Esophagus muscularis mucosa (tissue), 4 donors: ENCODE measurements at regions of chr17 and their contacts with region 1.

Region 1: GRCh38 chr17:62968445-62968923 is 2.4 kb downstream of the TANC2 start:
- DNase-seq: no peak
- H3K4me3 ChIP-seq: no peak overlapping the region
- H3K27ac ChIP-seq: no peak overlapping the region
- H3K4me1 ChIP-seq: peaks cover 14 to 30% (median 29%) of the 10 kb centered on the region in 4 donors
- H3K27me3 ChIP-seq: no peaks in the 10 kb centered on the region
- CTCF ChIP-seq: peak; percentile 71 to 88 (median 73)
- EP300 ChIP-seq: no peak
- POLR2A ChIP-seq: no peak

Region 2: DNA sequence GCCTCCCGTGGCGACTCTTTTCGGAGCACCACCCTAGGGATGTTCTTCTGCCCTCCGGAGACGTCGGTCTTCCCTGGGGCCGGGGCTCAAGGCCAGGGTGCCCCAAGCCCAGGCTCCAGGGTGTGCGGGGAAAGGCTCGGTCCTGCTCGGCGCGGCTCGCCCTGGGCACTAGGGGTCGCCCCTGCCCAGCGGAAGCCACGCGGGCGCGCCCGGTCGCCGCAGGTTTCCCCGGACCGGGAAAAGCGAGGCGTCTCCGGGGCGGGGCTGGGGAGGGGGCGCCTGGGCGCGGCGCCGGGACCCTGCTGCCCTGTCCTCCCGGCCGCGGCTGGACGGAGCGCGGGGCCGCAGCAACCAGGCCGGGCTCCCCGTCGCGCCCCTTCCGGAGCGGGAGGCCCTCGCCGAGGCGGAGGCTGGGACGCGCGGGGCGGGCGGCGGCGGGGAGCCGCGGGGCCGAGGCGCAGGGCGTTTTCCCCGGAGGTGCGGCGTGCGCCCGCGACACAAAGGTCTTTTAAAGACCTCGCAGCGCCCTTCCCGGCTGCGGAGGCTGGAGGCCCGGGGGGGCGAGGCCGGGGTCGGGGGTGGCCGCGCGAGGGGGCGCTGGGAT is 264.6 kb before region 1 on chr17:
- intact Hi-C with region 1: loop called (anchors 2 kb)
- DNase-seq: no peak
- H3K4me3 ChIP-seq: peak overlapping the region; percentile 65 to 90 (median 72)
- H3K27ac ChIP-seq: peak overlapping the region; percentile 61 to 82 (median 74)
- H3K4me1 ChIP-seq: peaks cover 20 to 29% (median 26%) of the 10 kb centered on the region in 4 donors
- H3K27me3 ChIP-seq: peaks cover 0 to 5% (median 0%) of the 10 kb centered on the region in 4 donors
- CTCF ChIP-seq: peak; percentile 85 to 94 (median 86)
- EP300 ChIP-seq: no peak
- POLR2A ChIP-seq: no peak

Region 3: DNA sequence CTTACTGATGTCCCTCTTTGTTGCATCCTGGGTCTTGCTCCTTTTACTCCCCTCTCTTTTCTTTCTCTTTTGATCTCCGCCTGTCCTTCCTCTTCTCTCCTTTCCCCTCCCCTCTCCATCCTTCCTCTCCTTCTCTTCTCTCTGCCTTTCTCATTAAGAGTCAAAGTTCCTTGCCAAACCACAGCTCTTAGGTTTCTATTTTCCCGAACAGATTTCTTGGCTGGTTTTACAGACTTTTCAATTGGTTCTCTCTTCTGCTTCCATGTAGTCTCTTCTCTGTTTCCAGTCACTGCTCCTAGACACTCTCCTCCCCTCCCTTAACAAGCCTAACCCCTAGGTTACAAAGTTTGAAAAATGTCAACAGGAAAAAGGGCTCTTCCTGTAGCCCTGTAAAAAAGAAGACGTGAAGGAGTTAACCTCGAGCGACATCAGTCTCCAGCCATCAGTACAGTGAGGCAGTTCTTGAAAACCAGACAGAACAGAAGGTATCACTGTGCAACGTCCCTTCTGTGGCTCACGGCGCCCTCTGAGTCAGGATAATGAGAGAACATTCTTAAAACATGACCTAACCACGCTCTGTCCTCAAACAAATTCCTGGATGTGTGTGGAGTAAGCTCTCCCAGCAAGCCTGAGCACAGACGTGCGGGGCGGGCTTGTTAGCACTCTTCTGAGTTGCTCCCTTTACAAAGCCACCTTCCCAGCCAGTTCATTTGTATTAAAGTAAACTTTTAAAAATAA is 148.8 kb before region 1 on chr17:
- intact Hi-C with region 1: loop called (anchors 10 kb)
- DNase-seq: peak; percentile 94
- H3K4me3 ChIP-seq: no peak overlapping the region
- H3K27ac ChIP-seq: peak overlapping the region; percentile 32 to 66 (median 56)
- H3K4me1 ChIP-seq: peaks cover 10 to 16% (median 12%) of the 10 kb centered on the region in 4 donors
- H3K27me3 ChIP-seq: no peaks in the 10 kb centered on the region
- CTCF ChIP-seq: no peak
- EP300 ChIP-seq: no peak
- POLR2A ChIP-seq: no peak

Region 4: DNA sequence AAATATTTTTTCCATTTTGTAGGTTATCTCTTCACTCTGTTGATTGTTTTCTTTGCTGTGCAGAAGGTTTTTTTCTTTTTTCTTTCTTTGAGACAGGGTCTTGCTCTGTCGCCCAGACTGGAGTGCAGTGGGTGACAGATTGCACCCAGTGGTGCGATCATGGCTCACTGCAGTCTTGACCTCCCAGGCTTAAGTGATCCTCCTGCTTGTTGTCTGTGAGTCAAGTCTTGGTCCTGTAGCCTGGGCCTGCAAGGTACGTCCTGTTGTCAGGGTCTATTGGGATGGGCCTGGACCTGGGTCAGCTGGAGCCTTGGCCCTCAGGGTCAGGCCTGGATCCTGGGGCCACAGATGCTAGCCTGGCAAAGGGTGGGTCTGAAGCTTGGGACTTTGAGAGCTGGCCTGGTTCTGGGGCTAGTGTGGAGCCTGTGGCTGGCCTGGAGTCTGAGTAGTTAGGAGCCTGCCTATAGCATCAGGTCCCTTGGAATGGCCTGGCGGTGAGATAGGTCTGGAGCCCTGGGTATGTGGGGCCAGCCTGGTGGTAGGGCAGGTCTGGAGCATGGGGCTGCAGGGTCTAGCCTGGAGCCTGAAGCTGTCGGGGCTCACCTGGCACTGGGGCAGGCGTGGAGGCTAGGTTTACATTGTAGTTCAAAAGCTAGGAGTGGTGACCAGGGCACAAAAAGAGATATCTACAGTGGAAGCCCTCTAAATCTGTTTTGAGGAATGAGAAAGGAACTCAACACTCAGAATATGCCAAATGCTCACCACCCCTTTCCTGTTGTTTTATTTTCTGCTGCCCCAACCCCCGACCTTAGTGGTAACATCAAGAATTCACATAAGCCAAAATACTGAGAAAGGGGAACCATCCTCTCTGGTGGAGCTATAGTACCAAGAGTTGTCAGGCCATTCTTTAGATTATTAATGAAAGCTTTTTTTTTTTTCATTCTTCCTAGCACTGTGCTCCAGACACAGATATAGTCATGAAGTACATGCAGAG is 97.6 kb after region 1 on chr17:
- intact Hi-C with region 1: no loop called
- DNase-seq: no peak
- H3K4me3 ChIP-seq: no peak overlapping the region
- H3K27ac ChIP-seq: no peak overlapping the region
- H3K4me1 ChIP-seq: no peaks in the 10 kb centered on the region
- H3K27me3 ChIP-seq: no peaks in the 10 kb centered on the region
- CTCF ChIP-seq: no peak
- EP300 ChIP-seq: no peak
- POLR2A ChIP-seq: no peak